CD14-positive monocyte (primary cell): ENCODE measurements at regions of chr4 and their contacts with region 1.

Region 1: GRCh38 chr4:17475481-17475880 is 36.4 kb downstream of the QDPR start:
- DNase-seq: no peak
- H3K4me3 ChIP-seq: no peak overlapping the region
- H3K4me3 Mint-ChIP-seq: no peak overlapping the region
- H3K27ac ChIP-seq: no peak overlapping the region
- H3K27ac Mint-ChIP-seq: no peak overlapping the region
- H3K4me1 ChIP-seq: peaks cover 15 to 20% of the 10 kb centered on the region in 2 donors
- H3K4me1 Mint-ChIP-seq: peaks cover 21% of the 10 kb centered on the region
- H3K27me3 ChIP-seq: no peaks in the 10 kb centered on the region
- H3K27me3 Mint-ChIP-seq: no peaks in the 10 kb centered on the region
- CTCF ChIP-seq: no peak

Region 2: DNA sequence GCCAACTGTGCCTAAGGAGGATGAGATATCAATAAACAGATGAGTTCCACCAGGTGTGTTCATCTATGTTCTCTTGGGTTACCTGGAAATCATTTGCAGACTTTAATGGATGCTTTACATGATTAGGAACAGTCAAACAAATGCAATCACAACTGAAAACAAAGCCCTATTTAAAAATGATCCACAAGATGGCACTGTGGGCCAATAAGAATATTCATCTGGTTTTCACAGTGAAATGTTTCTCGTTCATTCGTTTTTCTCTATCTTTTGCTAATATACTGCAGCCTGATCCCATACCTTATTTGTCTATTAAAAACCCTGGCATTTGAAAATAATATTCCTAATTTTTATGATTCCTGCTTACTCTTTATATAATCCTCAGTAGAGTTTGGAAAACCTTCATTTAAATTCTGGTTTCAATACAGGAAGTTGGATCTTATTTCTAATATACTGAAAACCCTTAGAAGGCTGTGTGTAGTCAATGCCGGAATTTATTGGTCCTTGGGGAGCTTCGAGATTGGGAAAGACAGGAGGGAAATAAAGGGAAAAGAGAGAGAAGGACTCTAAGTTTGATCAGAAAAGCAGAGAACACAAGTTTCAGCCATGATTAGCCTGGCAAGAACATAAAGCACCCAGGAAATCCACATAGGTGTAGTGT is 1185.5 kb before region 1 on chr4:
- intact Hi-C with region 1: loop called in 1 of 2 experiments (anchors 10 kb)
- DNase-seq: peak in 1 of 3 donors; percentile 13
- H3K4me3 ChIP-seq: no peak overlapping the region
- H3K4me3 Mint-ChIP-seq: peak overlapping the region in 1 of 2 donors; percentile 50
- H3K27ac ChIP-seq: no peak overlapping the region
- H3K27ac Mint-ChIP-seq: no peak overlapping the region
- H3K4me1 ChIP-seq: no peaks in the 10 kb centered on the region
- H3K4me1 Mint-ChIP-seq: peaks cover 5% of the 10 kb centered on the region
- H3K27me3 ChIP-seq: no peaks in the 10 kb centered on the region
- H3K27me3 Mint-ChIP-seq: peaks cover 1 to 5% (median 4%) of the 10 kb centered on the region in 3 donors
- CTCF ChIP-seq: peak; percentile 80